ENCODE measurements at regions of chr12 and their contacts with region 1.

Region 1: DNA sequence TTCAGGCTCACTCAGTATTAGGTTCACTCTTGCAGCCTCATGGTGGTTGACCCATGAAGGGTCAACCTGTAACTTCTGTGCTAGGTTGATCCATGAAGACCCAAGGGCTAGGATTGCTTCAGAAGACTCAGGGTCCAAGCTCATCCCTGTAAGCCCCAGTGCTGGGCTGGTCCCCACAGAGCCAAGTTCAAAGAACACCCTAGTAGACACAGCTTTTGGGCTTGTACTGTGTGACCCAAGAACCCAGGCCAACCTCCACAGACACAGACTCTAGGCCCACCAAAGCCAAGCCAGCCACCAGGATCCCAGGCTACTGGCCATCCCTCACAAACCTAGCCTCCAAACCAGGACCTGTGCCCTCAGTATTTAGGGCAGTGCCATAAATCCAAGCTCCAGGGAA is 1020.6 kb downstream of the SLC16A7 start:
- DNase-seq: no peak
- H3K4me3 ChIP-seq: no peak overlapping the region
- H3K27ac ChIP-seq: no peak overlapping the region
- H3K4me1 ChIP-seq: no peaks in the 10 kb centered on the region
- H3K27me3 ChIP-seq: no peaks in the 10 kb centered on the region
- CTCF ChIP-seq: no peak
- POLR2A ChIP-seq: no peak

Region 2: DNA sequence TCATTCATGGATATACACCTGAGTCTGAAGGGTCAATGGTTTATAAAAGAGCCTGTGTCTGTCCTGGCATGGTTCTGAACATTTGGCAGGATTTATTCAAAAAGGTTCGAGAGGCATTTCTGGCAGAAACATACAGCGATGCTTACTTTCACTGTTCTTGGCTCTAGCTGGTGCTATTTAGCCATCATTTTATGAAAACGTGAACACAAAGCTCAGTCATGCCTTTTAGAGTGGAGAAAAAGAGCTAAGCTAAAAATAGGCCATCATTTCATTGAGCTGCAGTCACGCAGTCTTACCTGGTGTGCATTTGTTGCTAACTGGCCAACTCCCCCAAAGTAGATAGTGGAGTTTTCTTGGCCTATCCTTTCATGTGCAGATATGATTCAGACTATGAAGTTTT is 189.0 kb after region 1 on chr12:
- intact Hi-C with region 1: loop called (anchors 5 kb)
- DNase-seq: no peak
- H3K4me3 ChIP-seq: no peak overlapping the region
- H3K27ac ChIP-seq: no peak overlapping the region
- H3K4me1 ChIP-seq: no peaks in the 10 kb centered on the region
- H3K27me3 ChIP-seq: no peaks in the 10 kb centered on the region
- CTCF ChIP-seq: no peak
- POLR2A ChIP-seq: no peak